Gastrocnemius medialis (tissue), 4 donors: ENCODE measurements at regions of chr7 and their contacts with region 1.

Region 1: GRCh38 chr7:17301471-17302456 is 3.3 kb downstream of the AHR start:
- DNase-seq: no peak
- ATAC-seq: no peak
- H3K4me3 ChIP-seq: peak overlapping the region in 2 of 4 donors; percentile 15 to 70
- H3K27ac ChIP-seq: peak overlapping the region in 3 of 4 donors; percentile 0 to 83 (median 75)
- H3K4me1 ChIP-seq: peaks cover 0 to 11% of the 10 kb centered on the region in 2 donors
- H3K27me3 ChIP-seq: peaks cover 0 to 16% (median 13%) of the 10 kb centered on the region in 3 donors
- CTCF ChIP-seq: peak; percentile 22 to 52 (median 32)
- POLR2A ChIP-seq: no peak

Region 2: DNA sequence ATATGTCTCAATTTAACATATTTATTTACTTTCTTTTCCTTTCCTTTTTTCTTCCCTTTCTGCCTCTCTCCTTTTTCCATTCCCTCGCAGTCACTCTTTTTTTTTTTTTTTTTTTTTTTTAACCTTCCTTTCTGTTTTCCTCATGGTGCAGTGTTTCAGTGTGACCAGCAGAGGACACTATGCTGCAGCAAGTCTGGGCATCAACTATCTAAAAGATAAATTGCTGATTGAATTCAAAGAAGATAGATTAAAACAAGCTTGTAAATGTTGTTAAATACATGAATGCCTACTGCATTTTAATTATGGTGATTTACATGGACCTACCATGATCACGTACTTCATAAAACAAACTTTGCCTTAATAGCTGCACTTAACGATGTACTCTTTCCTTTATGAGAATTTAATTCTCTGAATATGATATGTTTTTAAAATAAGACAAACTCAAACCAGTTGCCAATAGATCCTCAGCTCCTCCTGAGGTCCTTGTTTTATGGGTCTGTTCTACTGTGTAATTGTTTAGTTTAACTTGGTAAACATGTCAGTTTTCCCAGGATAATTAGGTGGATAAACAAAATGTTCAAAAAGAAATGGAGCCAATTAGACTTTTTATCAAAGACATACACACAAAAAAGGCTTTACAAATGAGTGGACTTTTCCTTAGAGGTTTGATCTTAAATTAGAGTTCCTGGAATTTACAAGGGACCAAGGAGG is 319.0 kb before region 1 on chr7:
- in situ Hi-C with region 1: loop called in 1 of 4 experiments (anchors 5 kb)
- intact Hi-C with region 1: loop called (anchors 10 kb)
- DNase-seq: no peak
- ATAC-seq: no peak
- H3K4me3 ChIP-seq: no peak overlapping the region
- H3K27ac ChIP-seq: no peak overlapping the region
- H3K4me1 ChIP-seq: no peaks in the 10 kb centered on the region
- H3K27me3 ChIP-seq: no peaks in the 10 kb centered on the region
- CTCF ChIP-seq: peak in 3 of 5 experiments; percentile 17 to 62 (median 62)
- POLR2A ChIP-seq: no peak

Region 3: DNA sequence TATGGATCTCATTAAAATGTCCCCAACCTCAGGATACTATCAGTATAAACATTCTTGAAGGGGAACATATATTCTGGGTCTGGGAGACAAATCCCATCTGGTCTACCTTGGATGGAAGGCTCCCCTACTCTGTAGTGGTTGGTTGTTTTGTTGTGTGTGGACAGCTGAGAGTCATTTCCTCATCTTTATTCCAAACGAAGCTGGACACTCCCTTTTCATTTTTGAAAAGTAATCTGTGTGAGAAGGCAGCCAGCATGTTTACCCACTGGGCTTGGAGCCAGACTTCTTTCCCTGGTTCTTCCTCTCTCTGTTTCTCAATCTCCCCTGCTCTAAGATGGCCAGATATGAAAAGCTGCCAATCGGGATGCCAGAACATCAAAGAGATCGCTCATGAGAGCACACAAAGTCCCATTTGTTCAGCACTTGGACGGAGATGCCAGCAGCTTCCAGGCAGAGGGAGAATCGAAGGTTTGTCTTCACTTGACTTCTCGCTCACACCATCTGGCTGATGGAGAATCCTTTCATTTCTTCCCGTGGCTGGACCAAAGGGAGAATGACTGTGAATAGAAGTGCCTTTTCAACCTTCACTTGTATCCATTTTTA is 311.9 kb before region 1 on chr7:
- in situ Hi-C with region 1: loop called in 1 of 4 experiments (anchors 5 kb)
- intact Hi-C with region 1: loop called (anchors 10 kb)
- DNase-seq: peak; percentile 34 to 62
- ATAC-seq: peak; percentile 75 to 76
- H3K4me3 ChIP-seq: peak overlapping the region in 1 of 4 donors; percentile 13
- H3K27ac ChIP-seq: no peak overlapping the region
- H3K4me1 ChIP-seq: no peaks in the 10 kb centered on the region
- H3K27me3 ChIP-seq: no peaks in the 10 kb centered on the region
- CTCF ChIP-seq: no peak
- POLR2A ChIP-seq: no peak

Region 4: GRCh38 chr7:17523813-17524741 is 222.3 kb after region 1 on chr7:
- in situ Hi-C with region 1: no loop called
- intact Hi-C with region 1: loop called (anchors 10 kb)
- DNase-seq: peak in 1 of 2 donors; percentile 27
- ATAC-seq: peak; percentile 70 to 85
- H3K4me3 ChIP-seq: no peak overlapping the region
- H3K27ac ChIP-seq: peak overlapping the region in 1 of 4 donors; percentile 24
- H3K4me1 ChIP-seq: peaks cover 0 to 6% of the 10 kb centered on the region in 2 donors
- H3K27me3 ChIP-seq: no peaks in the 10 kb centered on the region
- CTCF ChIP-seq: no peak
- POLR2A ChIP-seq: no peak

Region 5: DNA sequence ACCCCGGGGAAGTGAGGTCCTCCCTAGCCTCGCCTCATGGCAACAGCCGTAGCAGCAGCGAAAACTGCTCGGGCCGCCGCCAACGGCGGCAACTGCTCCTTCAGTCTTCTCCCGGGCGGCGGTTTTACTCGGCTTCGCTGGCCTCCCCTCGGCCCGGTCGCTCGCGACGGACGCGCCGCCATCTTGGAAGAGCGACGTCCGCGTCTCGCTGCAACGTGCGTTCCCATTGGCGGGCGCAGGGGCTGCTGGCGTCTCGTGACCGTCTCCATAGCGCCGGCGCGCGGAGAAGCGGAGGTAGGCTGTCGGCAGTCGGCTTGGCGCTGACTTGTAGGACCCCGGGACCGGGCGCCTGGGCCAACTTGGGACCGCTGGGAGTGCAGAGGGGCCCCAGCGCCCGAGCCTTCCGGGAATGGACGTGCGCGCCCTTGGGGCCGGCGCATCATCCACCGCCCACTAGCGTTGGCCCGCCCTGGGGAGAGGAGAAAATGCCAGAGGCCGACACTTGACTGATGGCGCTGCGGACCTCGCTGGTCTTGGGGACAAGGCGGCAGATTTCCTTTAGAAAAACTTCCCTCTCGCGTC is 638.6 kb after region 1 on chr7 and contains the start of gene SNX13:
- in situ Hi-C with region 1: loop called in 1 of 4 experiments (anchors 25 kb)
- intact Hi-C with region 1: no loop called
- DNase-seq: peak; percentile 87 to 88
- ATAC-seq: peak; percentile 93 to 95
- H3K4me3 ChIP-seq: peak within 1 kb of the TSS; percentile 84 to 97 (median 92)
- H3K27ac ChIP-seq: peak within 1 kb of the TSS; percentile 98 to 99 (median 98)
- H3K4me1 ChIP-seq: peaks cover 35 to 43% of the 10 kb centered on the region in 2 donors
- H3K27me3 ChIP-seq: no peaks in the 10 kb centered on the region
- CTCF ChIP-seq: peak in 4 of 5 experiments; percentile 9 to 44 (median 32)
- POLR2A ChIP-seq: peak; percentile 71 to 78
- total RNA-seq, gene SNX13: 74.9 to 154 (median 107) TPM